Right ventricle myocardium inferior (tissue), 1 donor: ENCODE measurements at regions of chr16 and their contacts with region 1.

Region 1: DNA sequence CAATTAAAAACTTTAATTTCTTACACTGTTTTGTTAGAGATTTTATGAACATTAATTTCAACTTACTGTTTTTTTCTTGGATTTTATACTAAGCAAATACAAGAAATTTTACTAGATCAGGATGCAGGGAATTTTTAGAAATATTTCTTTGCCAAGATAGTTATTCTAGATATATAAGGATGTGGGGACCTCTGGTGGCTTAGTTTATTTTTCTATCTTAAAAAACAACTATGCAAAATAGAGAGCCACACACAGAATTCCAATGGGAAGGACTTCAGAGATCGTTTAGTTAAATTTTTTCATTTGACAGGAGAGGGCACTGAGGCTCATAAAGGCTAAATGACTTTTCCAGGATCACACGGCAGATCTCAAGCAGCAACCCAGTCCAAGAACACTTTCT is 23.0 kb upstream of the CAPNS2 start:
- DNase-seq: no peak
- ATAC-seq: no peak

Region 2: GRCh38 chr16:55494994-55495421 is 48.5 kb before region 1 on chr16:
- intact Hi-C with region 1: loop called (anchors 5 kb)
- DNase-seq: no peak
- ATAC-seq: peak; percentile 63

Region 3: DNA sequence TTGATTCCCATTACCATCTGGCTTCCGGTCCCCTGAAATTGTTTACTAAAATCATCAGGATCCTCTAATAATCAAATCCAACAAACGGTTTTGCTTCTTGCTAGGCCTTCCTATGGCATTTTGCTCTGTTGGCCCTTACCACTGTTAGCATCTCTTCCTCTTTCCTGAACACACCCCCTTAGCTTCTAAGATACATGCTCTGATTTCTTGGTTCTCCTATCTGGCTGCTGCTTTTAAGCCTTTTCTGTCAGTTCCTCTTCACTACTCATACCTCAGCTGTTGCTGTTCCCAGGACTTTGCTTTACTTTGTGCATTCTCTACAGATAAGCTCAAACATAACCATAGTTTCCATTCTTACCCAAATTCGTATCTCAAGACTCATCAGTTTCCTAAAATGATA is 34.4 kb after region 1 on chr16:
- intact Hi-C with region 1: no loop called
- DNase-seq: no peak
- ATAC-seq: no peak

Region 4: GRCh38 chr16:55701442-55702319 is 158.2 kb after region 1 on chr16:
- intact Hi-C with region 1: loop called (anchors 5 kb)
- DNase-seq: peak; percentile 74
- ATAC-seq: peak; percentile 21